ENCODE measurements at regions of chr13 and their contacts with region 1.

Region 1: DNA sequence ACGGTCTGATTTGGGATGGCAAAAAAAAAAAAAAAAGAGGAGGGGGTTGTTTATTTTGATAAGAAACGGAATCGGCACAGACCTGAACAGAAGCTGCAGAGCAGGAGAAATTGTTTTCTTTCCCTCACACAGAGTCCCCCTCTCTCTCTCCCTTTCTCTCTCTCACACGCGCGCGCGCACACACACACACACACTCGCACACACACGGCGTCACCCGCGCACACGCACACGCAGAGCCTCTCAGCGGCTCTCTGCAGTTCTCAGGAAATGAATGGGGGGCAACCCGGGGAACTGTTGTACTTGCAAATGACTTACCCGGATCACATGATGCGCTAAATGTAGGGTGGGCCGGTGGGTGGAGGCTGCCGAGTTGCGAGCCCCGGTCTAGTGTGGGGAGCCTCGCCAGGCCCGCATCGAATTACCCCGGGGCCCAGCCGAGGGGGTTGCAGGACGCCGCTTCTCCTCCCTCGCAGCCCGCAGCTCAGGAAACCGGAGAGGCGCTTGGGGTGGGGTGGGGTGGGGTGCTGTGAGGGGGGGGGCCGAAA is 475 bp downstream of the KLF12 start:
- DNase-seq: peak; percentile 85 to 98 (median 96)
- H3K4me3 ChIP-seq: peak overlapping the region; percentile 89
- H3K4me3 Mint-ChIP-seq: peak overlapping the region; percentile 95 to 100 (median 97)
- H3K27ac ChIP-seq: peak overlapping the region; percentile 91
- H3K27ac Mint-ChIP-seq: peak overlapping the region; percentile 96 to 100 (median 98)
- H3K4me1 ChIP-seq: peaks cover 32% of the 10 kb centered on the region
- H3K4me1 Mint-ChIP-seq: peaks cover 37 to 40% (median 38%) of the 10 kb centered on the region in 3 donors
- H3K27me3 ChIP-seq: no peaks in the 10 kb centered on the region
- H3K27me3 Mint-ChIP-seq: peaks cover 0 to 6% of the 10 kb centered on the region in 2 donors

Region 2: DNA sequence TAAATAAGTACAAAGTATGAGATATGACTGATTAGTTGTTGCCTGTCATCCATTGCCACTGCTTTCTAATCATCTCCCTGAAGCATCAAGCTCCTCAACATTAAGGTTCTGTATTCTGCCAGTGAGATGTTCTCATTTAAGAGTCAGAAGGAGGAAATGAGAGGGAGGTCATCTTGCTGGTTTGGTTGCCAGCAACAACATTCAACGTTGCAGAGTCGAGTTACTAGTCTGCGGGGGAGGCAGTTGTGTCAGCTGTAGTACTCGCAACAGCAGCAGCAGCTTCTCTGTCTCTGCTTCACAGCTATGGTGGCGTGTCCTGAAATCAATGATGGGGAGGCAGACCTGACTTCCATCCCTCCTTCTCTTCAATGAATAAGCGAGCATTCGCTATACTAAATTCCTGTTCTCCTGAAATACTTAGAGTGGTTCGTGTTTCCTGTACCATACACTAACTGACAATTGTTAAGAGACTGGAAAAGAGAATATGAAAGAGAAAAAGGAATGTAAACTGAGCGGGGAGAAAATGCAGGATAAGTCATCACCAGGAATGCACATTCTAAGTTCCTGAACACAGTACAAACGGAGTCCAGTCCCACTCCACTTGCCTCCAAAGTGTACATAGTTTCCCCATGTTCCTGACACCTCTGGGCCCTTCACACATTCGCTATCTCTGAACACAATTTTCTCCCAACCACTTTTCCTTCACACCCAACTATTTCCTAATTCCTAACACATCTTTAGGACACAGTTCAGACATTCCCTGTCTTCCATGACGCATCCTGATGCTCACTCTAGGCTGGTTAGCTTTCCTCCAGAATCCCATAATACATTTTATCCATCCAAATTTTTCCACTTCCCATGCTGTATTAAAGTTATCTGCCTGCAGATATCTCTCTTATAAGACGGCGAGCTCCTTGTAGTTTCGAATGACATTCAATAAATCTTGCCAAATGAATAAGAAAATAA is 262.5 kb before region 1 on chr13:
- CTCF ChIA-PET with region 1: no interaction called
- POLR2A ChIA-PET with region 1: no interaction called
- DNase-seq: no peak
- H3K4me3 ChIP-seq: no peak overlapping the region
- H3K4me3 Mint-ChIP-seq: no peak overlapping the region
- H3K27ac ChIP-seq: no peak overlapping the region
- H3K27ac Mint-ChIP-seq: peak overlapping the region; percentile 16 to 91 (median 60)
- H3K4me1 ChIP-seq: peaks cover 23% of the 10 kb centered on the region
- H3K4me1 Mint-ChIP-seq: peaks cover 53 to 75% (median 73%) of the 10 kb centered on the region in 3 donors
- H3K27me3 ChIP-seq: no peaks in the 10 kb centered on the region
- H3K27me3 Mint-ChIP-seq: no peaks in the 10 kb centered on the region

Region 3: GRCh38 chr13:74026753-74027152 is 107.0 kb before region 1 on chr13:
- CTCF ChIA-PET with region 1: interaction called, 3 read pairs
- POLR2A ChIA-PET with region 1: interaction called, 12 read pairs
- DNase-seq: peak; percentile 53 to 81 (median 69)
- H3K4me3 ChIP-seq: peak overlapping the region; percentile 32
- H3K4me3 Mint-ChIP-seq: peak overlapping the region; percentile 73 to 92 (median 85)
- H3K27ac ChIP-seq: no peak overlapping the region
- H3K27ac Mint-ChIP-seq: peak overlapping the region; percentile 81 to 97 (median 90)
- H3K4me1 ChIP-seq: peaks cover 65% of the 10 kb centered on the region
- H3K4me1 Mint-ChIP-seq: peaks cover 83 to 97% (median 96%) of the 10 kb centered on the region in 3 donors
- H3K27me3 ChIP-seq: no peaks in the 10 kb centered on the region
- H3K27me3 Mint-ChIP-seq: no peaks in the 10 kb centered on the region

Region 4: DNA sequence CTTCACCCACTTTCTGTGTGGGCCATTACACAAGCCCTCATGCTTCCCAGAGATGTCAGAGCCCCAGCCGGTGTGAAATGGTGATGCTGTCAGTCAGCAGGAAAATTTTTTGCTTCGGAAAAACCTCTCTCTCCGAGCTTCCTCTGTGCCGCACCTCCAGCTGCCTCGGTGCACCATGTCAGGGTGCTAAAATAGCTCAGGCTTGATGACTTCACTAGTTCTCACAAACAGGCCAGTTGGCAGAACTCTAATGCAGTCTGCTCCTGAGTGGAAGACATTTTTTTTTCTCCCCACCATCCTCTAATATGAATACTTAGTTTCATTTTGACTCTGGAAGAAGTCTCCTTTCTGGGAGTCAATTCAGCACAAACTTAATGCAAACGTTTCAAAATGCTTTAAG is 70.8 kb before region 1 on chr13:
- CTCF ChIA-PET with region 1: interaction called, 3 read pairs
- POLR2A ChIA-PET with region 1: interaction called, 21 read pairs
- DNase-seq: peak in 4 of 5 donors; percentile 3 to 59 (median 21)
- H3K4me3 ChIP-seq: peak overlapping the region; percentile 6
- H3K4me3 Mint-ChIP-seq: peak overlapping the region; percentile 61 to 92 (median 73)
- H3K27ac ChIP-seq: no peak overlapping the region
- H3K27ac Mint-ChIP-seq: peak overlapping the region; percentile 65 to 97 (median 87)
- H3K4me1 ChIP-seq: peaks cover 86% of the 10 kb centered on the region
- H3K4me1 Mint-ChIP-seq: peaks cover 81 to 95% (median 94%) of the 10 kb centered on the region in 3 donors
- H3K27me3 ChIP-seq: no peaks in the 10 kb centered on the region
- H3K27me3 Mint-ChIP-seq: no peaks in the 10 kb centered on the region

Region 5: GRCh38 chr13:74398599-74398998 is 264.9 kb after region 1 on chr13:
- CTCF ChIA-PET with region 1: no interaction called
- POLR2A ChIA-PET with region 1: no interaction called
- DNase-seq: no peak
- H3K4me3 ChIP-seq: no peak overlapping the region
- H3K4me3 Mint-ChIP-seq: no peak overlapping the region
- H3K27ac ChIP-seq: no peak overlapping the region
- H3K27ac Mint-ChIP-seq: no peak overlapping the region
- H3K4me1 ChIP-seq: no peaks in the 10 kb centered on the region
- H3K4me1 Mint-ChIP-seq: no peaks in the 10 kb centered on the region
- H3K27me3 ChIP-seq: no peaks in the 10 kb centered on the region
- H3K27me3 Mint-ChIP-seq: no peaks in the 10 kb centered on the region

Region 6: GRCh38 chr13:74920920-74921319 is 787.2 kb after region 1 on chr13:
- CTCF ChIA-PET with region 1: no interaction called
- POLR2A ChIA-PET with region 1: no interaction called
- DNase-seq: no peak
- H3K4me3 ChIP-seq: no peak overlapping the region
- H3K4me3 Mint-ChIP-seq: no peak overlapping the region
- H3K27ac ChIP-seq: peak overlapping the region; percentile 6
- H3K27ac Mint-ChIP-seq: peak overlapping the region in 1 of 8 donors; percentile 15
- H3K4me1 ChIP-seq: no peaks in the 10 kb centered on the region
- H3K4me1 Mint-ChIP-seq: peaks cover 6 to 11% (median 7%) of the 10 kb centered on the region in 3 donors
- H3K27me3 ChIP-seq: no peaks in the 10 kb centered on the region
- H3K27me3 Mint-ChIP-seq: peaks cover 0 to 2% of the 10 kb centered on the region in 2 donors